GM10248 (cell line): ENCODE measurements at regions of chr14 and their contacts with region 1.

Region 1: DNA sequence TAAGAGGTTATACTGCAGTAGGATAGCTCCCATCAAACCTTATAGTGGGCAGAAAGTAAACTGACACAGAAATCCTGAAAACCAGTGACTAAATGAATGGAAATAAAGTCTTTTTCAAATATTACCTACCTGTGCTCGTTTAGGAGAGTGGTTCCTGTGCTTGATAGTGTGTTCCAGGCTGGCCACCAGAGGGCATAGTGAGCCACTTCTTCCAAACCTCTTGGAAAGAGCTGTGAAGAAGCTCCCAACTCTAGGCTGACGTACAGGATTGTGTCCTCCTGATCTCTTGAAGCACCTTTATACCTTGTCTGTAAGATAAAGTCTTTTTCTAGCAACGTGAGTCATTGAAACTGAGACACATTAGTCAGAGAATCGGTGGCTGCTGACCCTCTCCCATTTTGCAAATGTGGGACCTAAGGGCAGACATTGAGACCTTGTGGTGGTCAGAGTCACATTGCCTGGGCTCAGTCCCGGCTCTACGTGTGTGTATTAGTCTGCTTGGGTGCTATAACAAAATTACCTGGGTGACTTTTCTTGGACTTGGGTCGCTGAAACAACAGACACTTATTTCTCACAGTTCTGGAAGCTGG is 17.6 kb downstream of the TDP1 start:
- DNase-seq: peak; percentile 58
- CTCF ChIP-seq: peak; percentile 62

Region 2: GRCh38 chr14:89027097-89027740 is 946.1 kb before region 1 on chr14:
- CTCF ChIA-PET with region 1: interaction called, 12 read pairs
- POLR2A ChIA-PET with region 1: no interaction called
- DNase-seq: peak; percentile 88
- CTCF ChIP-seq: peak; percentile 85

Region 3: DNA sequence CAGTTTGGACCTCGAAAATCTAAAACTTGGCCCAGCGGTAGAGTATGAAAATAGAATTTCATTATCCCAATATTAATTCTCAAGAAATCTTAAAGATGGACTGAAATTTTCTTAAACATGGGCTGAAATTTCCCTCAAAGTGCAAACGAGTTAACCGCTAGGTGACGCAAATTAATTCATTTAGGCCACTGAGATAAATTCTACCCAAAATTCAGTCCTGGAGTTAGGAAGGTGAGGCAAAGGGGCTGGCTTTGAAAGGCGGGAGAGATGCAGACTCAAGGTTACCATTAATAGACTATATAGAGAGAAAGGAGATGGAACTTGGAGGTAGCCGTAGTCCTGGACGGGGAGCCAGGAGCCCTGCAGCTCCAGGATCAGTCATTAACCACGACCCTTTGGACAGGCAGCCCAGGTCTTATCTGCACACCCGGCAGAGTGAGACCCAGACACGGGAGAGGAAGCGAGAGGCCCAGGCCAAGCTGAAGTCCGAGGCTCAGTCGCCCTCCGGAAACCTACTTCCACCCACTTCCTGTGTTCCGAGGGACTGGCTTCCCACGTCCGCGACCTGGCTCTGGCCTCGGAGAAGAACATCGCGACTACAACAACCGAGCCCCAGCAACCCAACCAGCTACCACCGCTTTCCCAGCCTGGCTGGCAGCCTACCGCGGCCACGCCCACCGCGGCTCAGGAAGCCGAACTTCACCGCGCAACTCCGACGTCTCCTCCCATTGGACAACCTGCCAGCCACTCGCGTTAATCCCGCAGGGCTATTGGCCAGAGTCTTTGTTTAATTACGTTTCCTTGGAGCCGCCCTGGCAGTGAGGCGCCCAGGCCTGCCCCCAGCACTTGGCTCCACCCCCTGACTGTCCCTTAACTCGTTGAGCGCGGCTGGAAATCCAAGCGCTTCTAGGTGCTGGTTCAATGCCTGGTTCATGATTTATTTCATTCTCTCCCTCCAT is 19.0 kb before region 1 on chr14 and contains the start of gene EFCAB11:
- CTCF ChIA-PET with region 1: interaction called, 56 read pairs
- POLR2A ChIA-PET with region 1: interaction called, 5 read pairs
- DNase-seq: peak; percentile 93
- CTCF ChIP-seq: peak; percentile 12

Region 4: DNA sequence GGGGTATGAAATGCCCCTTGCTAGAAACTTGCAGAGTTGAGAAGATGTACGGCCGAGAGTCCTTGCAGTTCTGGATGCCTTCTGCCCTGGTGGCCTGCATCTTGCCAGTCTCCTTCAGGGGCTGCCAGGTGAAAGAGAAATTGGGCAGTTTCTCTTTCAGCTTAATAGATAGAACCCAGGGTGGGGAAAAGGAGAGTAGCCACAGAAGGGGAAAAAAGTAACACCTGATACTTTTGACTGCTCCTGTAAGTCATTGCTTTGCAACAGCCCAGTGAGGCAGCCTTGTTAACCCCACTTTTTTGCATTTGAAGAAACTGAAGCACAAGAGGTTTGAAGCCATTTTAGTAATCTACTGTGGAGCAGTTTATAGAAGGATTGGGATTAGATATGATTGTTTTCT is 10.0 kb after region 1 on chr14:
- CTCF ChIA-PET with region 1: interaction called, 69 read pairs
- POLR2A ChIA-PET with region 1: interaction called, 3 read pairs
- DNase-seq: no peak
- CTCF ChIP-seq: no peak

Region 5: DNA sequence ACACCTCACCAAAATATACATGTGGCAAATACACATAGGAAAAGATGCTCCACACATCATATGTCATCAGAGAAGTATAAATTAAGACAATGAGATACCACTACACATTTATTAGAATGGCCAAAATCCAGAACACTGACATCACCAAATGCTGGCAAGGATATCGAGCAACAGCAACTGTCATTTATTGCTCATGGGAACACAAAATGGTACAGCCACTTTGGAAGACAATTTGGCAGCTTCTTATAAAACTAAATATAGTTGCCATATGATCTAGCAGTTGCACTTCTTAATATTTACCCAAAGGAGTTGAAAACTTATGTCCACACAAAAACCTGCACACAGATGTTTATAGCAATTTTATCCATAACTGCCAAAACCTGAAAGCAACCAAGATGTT is 81.5 kb after region 1 on chr14:
- CTCF ChIA-PET with region 1: interaction called, 19 read pairs
- POLR2A ChIA-PET with region 1: no interaction called
- DNase-seq: no peak
- CTCF ChIP-seq: no peak

Region 6: GRCh38 chr14:90235179-90235976 is 262.0 kb after region 1 on chr14:
- CTCF ChIA-PET with region 1: interaction called, 23 read pairs
- POLR2A ChIA-PET with region 1: no interaction called
- DNase-seq: peak; percentile 81
- CTCF ChIP-seq: peak; percentile 84